Natural killer cell (primary cell): ENCODE measurements at regions of chrX and their contacts with region 1.

Region 1: DNA sequence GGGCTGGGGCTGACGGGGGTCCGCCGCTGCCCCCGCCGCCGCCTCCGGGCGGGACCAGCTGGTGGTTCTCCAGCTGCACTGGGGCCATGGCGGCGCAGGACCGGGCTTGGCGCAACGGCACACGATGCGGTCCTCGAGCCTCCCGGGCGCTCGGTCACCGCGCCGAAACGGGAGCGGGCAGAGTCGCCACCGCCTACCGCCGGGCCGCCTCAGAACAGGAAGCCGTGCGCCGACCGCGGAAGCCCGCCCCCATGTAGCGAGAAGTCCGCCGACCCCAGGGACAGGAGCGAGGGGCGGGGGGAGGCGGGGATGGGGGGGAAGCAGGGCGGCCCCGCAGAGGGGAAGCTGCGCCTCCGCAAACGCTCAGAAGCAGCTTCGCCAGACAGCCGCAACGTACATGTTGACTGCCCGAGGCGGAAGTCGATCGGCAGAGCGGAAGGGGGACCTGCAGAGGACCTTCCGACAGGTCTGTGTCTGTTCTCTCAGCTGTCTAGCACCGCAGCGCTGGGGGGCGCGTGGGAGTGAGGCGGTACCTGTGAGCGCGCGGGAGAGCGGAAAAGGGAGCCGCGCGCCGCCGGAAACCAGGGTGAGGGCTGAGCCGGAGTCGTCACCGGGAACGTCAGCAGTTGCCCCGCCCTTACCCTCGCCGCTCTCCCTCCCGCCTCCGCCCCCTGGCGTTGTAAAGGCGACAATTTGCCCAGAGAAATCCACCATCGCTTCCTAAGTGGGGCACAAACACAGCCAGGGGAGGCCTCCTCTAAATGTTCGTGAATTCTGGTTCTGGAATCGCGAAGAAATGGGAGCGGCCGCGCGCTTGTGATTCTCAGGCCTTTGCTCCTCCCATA is at the start of gene MED14:
- DNase-seq: peak; percentile 80 to 94
- ATAC-seq: peak; percentile 84 to 95 (median 84)
- H3K4me3 ChIP-seq: peak within 1 kb of the TSS; percentile 61
- H3K4me3 Mint-ChIP-seq: peak within 1 kb of the TSS; percentile 98
- H3K27ac ChIP-seq: peak within 1 kb of the TSS; percentile 96
- H3K27ac Mint-ChIP-seq: peak within 1 kb of the TSS; percentile 96 to 98
- H3K4me1 ChIP-seq: peaks cover 14% of the 10 kb centered on the region
- H3K4me1 Mint-ChIP-seq: peaks cover 30 to 40% of the 10 kb centered on the region in 2 donors
- H3K27me3 ChIP-seq: no peaks in the 10 kb centered on the region
- H3K27me3 Mint-ChIP-seq: peaks cover 0 to 13% of the 10 kb centered on the region in 2 donors
- CTCF ChIP-seq: peak; percentile 31
- total RNA-seq, gene MED14: 55.3 to 79.1 (median 66.1) TPM

Region 2: GRCh38 chrX:40580537-40581335 is 154.8 kb before region 1 on chrX and contains the start of gene ATP6AP2:
- intact Hi-C with region 1: loop called (anchors 2 kb)
- DNase-seq: peak; percentile 81 to 94
- ATAC-seq: peak; percentile 92 to 97 (median 93)
- H3K4me3 ChIP-seq: peak within 1 kb of the TSS; percentile 69
- H3K4me3 Mint-ChIP-seq: peak within 1 kb of the TSS; percentile 93
- H3K27ac ChIP-seq: peak within 1 kb of the TSS; percentile 90
- H3K27ac Mint-ChIP-seq: peak within 1 kb of the TSS; percentile 95 to 98
- H3K4me1 ChIP-seq: peaks cover 20% of the 10 kb centered on the region
- H3K4me1 Mint-ChIP-seq: peaks cover 11 to 29% of the 10 kb centered on the region in 2 donors
- H3K27me3 ChIP-seq: no peaks in the 10 kb centered on the region
- H3K27me3 Mint-ChIP-seq: peaks cover 0 to 6% of the 10 kb centered on the region in 2 donors
- CTCF ChIP-seq: no peak
- total RNA-seq, gene ATP6AP2: 94.3 to 102 (median 99.9) TPM

Region 3: GRCh38 chrX:41047878-41048534 is 312.5 kb after region 1 on chrX:
- intact Hi-C with region 1: no loop called
- DNase-seq: no peak
- ATAC-seq: no peak
- H3K4me3 ChIP-seq: no peak overlapping the region
- H3K4me3 Mint-ChIP-seq: no peak overlapping the region
- H3K27ac ChIP-seq: no peak overlapping the region
- H3K27ac Mint-ChIP-seq: no peak overlapping the region
- H3K4me1 ChIP-seq: no peaks in the 10 kb centered on the region
- H3K4me1 Mint-ChIP-seq: no peaks in the 10 kb centered on the region
- H3K27me3 ChIP-seq: no peaks in the 10 kb centered on the region
- H3K27me3 Mint-ChIP-seq: peaks cover 0 to 33% of the 10 kb centered on the region in 2 donors
- CTCF ChIP-seq: no peak

Region 4: DNA sequence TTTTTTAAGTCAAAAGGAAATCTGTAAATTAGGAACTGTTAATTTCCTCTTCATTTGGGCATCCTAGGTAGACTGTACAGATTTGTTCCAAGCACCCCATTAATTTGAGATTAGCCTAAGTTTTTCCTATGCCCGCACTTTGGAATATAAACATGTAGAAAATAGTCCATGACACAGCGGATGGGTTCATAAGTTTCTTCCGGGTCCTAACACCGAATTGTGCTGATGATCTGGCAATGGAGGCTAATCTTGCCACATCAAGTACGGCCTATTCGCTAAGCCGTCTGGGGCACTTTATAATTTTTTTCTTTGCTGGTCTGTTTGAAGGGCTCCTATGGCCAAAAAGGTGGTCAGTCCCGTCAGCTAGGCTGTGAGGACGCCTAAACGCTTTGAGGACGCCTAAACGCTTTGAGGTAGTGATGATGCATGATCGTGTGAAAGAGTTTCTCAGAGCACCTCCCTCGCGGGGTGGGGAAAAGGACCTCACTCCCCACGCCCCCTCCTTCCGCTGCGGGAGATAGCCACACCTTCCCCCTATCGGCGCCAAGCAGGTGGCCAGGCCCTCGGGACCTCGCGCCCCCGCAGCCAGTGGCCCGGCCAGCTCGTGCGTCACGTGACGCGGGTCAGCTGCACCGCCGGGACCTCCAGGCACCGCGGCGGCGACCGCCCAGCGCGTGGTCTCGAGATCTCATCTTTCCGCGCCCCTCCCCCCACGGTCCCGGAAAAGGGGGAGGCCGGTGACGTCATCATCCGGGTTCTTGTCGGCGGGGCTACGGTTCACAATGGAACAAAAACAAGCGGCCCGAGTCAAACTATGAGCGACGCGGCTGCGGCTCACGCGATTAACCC is 348.7 kb after region 1 on chrX:
- intact Hi-C with region 1: loop called (anchors 10 kb)
- DNase-seq: peak; percentile 96 to 97
- ATAC-seq: peak; percentile 69 to 85 (median 70)
- H3K4me3 ChIP-seq: peak overlapping the region; percentile 96
- H3K4me3 Mint-ChIP-seq: peak overlapping the region; percentile 93
- H3K27ac ChIP-seq: peak overlapping the region; percentile 100
- H3K27ac Mint-ChIP-seq: peak overlapping the region; percentile 95 to 97
- H3K4me1 ChIP-seq: peaks cover 5% of the 10 kb centered on the region
- H3K4me1 Mint-ChIP-seq: peaks cover 15 to 44% of the 10 kb centered on the region in 2 donors
- H3K27me3 ChIP-seq: no peaks in the 10 kb centered on the region
- H3K27me3 Mint-ChIP-seq: peaks cover 0 to 13% of the 10 kb centered on the region in 2 donors
- CTCF ChIP-seq: no peak

Region 5: GRCh38 chrX:41293269-41293668 is 557.7 kb after region 1 on chrX:
- intact Hi-C with region 1: no loop called
- DNase-seq: peak in 1 of 2 donors; percentile 19
- ATAC-seq: peak in 2 of 3 donors; percentile 55 to 57
- H3K4me3 ChIP-seq: no peak overlapping the region
- H3K4me3 Mint-ChIP-seq: no peak overlapping the region
- H3K27ac ChIP-seq: no peak overlapping the region
- H3K27ac Mint-ChIP-seq: no peak overlapping the region
- H3K4me1 ChIP-seq: no peaks in the 10 kb centered on the region
- H3K4me1 Mint-ChIP-seq: no peaks in the 10 kb centered on the region
- H3K27me3 ChIP-seq: no peaks in the 10 kb centered on the region
- H3K27me3 Mint-ChIP-seq: no peaks in the 10 kb centered on the region
- CTCF ChIP-seq: no peak